Heart right ventricle (tissue), 16 donors: ENCODE measurements at regions of chr9 and their contacts with region 1.

Region 1: GRCh38 chr9:113095561-113095960 is 39.0 kb upstream of the ZFP37 start:
- DNase-seq: no peak
- ATAC-seq: no peak
- H3K4me3 ChIP-seq: no peak overlapping the region
- H3K27ac ChIP-seq: no peak overlapping the region
- H3K4me1 ChIP-seq: no peaks in the 10 kb centered on the region
- H3K27me3 ChIP-seq: peaks cover 0 to 78% (median 66%) of the 10 kb centered on the region in 7 donors
- CTCF ChIP-seq: no peak

Region 2: GRCh38 chr9:112939418-112939817 is 156.1 kb before region 1 on chr9:
- intact Hi-C with region 1: loop called in 4 of 10 experiments (anchors 10 kb)
- DNase-seq: no peak
- ATAC-seq: no peak
- H3K4me3 ChIP-seq: no peak overlapping the region
- H3K27ac ChIP-seq: no peak overlapping the region
- H3K4me1 ChIP-seq: no peaks in the 10 kb centered on the region
- H3K27me3 ChIP-seq: peaks cover 0 to 31% (median 12%) of the 10 kb centered on the region in 7 donors
- CTCF ChIP-seq: no peak

Region 3: DNA sequence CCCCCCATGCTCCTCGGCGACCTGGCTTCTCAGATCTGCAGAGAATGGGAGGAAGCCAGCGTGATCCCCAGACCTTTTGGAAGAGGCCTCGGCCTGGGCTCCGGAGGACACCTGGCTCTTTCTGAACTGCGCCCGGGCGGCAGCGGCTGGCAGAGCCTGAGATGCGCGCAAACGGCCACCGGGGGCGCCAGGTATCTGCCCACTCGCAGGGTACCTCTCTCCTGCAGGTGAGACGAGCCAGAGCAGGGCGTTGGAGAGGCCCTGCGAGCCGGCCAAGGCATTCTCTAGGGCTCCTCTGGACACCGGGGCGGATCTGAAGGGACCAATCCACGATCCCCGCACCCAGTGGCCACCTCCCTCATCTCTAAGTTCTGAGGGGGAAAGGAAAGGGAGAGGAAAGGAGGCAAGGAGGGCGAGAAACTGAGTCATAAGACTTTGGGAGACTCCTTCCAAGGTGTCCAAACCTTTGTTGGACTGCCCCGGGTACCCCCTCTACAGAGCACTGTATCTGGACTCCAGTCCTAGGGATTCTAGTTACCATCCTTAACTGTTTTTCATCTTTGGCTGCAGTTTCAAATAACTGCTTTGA is 149.8 kb before region 1 on chr9:
- intact Hi-C with region 1: loop called in 1 of 10 experiments (anchors 10 kb)
- DNase-seq: no peak
- ATAC-seq: no peak
- H3K4me3 ChIP-seq: no peak overlapping the region
- H3K27ac ChIP-seq: no peak overlapping the region
- H3K4me1 ChIP-seq: no peaks in the 10 kb centered on the region
- H3K27me3 ChIP-seq: peaks cover 0 to 17% (median 6%) of the 10 kb centered on the region in 7 donors
- CTCF ChIP-seq: no peak

Region 4: DNA sequence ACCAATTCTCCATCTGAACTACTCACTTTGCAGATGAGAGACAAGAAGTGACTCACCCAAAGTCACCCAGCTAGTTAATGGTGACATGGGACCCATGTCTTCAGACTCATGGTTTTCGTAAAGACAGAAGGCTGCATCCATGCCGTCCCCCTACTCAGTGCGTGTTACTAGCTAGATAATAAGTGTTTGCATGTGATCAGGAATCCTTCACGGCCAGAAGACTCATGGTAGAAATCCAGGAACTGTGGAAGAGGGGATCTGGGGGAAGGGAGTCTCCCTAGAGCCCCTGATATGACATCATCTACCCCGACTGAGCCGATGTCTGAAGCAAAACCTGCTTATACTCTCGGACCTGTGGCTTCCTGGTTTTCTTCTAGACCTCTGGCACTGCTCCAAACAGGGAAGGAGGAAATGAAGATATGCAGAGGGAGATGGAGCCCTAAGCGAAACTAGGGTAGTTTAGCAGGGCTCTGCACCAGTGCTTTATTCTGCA is 204.3 kb after region 1 on chr9:
- intact Hi-C with region 1: no loop called
- DNase-seq: peak in 1 of 2 donors; percentile 27
- ATAC-seq: peak in 4 of 8 donors; percentile 15 to 49 (median 31)
- H3K4me3 ChIP-seq: peak overlapping the region in 1 of 10 donors; percentile 20
- H3K27ac ChIP-seq: no peak overlapping the region
- H3K4me1 ChIP-seq: peaks cover 0 to 9% (median 0%) of the 10 kb centered on the region in 9 donors
- H3K27me3 ChIP-seq: no peaks in the 10 kb centered on the region
- CTCF ChIP-seq: no peak